CD4-positive, alpha-beta T cell (primary cell): ENCODE measurements at regions of chr4 and their contacts with region 1.

Region 1: DNA sequence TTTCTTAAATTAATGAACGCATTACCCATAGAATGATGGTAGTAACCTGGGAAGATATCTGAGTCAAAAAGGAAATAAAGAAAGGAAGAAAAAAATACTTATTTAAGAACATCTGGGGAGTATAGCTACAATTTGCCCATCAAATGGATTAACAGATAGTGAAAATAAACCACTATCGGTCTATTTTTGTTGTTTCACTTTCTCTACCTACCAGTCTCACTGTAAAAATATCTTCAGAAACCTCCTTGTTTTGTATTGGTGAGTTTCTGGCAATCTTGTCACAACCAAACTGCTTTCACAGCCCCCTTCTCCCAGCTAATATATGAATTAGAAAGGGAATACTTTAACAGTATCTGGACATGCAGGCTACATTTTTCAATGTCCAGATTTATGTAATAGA is 783.5 kb downstream of the STPG2 start:
- DNase-seq: no peak
- ATAC-seq: no peak
- H3K4me3 ChIP-seq: no peak overlapping the region
- H3K4me3 Mint-ChIP-seq: no peak overlapping the region
- H3K27ac ChIP-seq: no peak overlapping the region
- H3K27ac Mint-ChIP-seq: no peak overlapping the region
- H3K4me1 ChIP-seq: no peaks in the 10 kb centered on the region
- H3K4me1 Mint-ChIP-seq: no peaks in the 10 kb centered on the region
- H3K27me3 ChIP-seq: no peaks in the 10 kb centered on the region
- H3K27me3 Mint-ChIP-seq: no peaks in the 10 kb centered on the region
- CTCF ChIP-seq: no peak

Region 2: DNA sequence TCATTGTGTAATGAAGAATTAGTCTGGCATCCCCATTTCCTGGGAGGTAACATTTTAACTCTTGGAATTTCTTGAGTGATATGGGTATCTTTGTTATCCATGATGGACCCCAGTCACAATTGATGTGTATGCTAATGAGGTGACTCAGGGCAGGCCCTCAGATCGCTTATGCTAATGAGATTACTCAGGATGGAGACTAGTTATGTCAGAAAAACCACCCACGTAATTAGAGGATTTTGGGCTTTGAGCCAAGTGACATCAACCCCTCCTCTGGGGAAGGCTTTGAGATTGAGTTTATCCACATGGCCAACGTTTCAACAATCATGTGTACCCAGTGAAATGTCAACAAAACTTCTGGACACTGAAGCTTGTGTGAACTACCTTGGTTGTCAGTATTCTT is 10.7 kb after region 1 on chr4:
- CTCF ChIA-PET with region 1: no interaction called
- POLR2A ChIA-PET with region 1: no interaction called
- intact Hi-C with region 1: loop called in 1 of 2 experiments (anchors 1 kb)
- DNase-seq: no peak
- ATAC-seq: no peak
- H3K4me3 ChIP-seq: no peak overlapping the region
- H3K4me3 Mint-ChIP-seq: no peak overlapping the region
- H3K27ac ChIP-seq: no peak overlapping the region
- H3K27ac Mint-ChIP-seq: no peak overlapping the region
- H3K4me1 ChIP-seq: no peaks in the 10 kb centered on the region
- H3K4me1 Mint-ChIP-seq: no peaks in the 10 kb centered on the region
- H3K27me3 ChIP-seq: no peaks in the 10 kb centered on the region
- H3K27me3 Mint-ChIP-seq: no peaks in the 10 kb centered on the region
- CTCF ChIP-seq: no peak